ENCODE measurements at regions of chr21 and their contacts with region 1.

Region 1: DNA sequence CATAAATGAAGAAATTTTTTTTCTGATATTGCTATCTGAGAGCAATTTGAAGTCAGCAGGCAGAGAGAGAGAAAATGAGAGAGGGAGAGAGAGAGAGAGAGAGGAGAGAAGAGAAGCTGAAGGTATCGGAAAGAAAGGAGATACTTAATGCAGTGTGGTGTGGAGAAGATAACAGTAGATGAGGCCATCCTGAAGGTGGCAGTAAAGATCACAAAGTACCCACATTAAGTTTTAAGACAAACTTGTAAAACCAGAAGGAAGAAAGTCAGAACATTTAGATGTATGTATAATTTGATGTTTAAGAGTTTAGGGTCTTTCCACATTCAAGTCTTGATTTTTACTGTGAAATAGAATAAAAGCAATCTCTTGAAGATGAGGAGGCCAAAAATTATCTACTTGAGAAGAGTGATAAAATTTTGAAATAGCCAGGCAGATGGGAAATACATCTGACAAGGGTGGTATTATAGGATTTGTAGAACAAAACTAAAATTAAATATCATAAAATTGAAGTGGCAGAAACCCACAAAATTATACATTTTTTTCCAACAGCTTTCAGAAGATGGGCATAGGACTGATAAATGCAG is 1753.4 kb downstream of the MRPL39 start:
- DNase-seq: no peak
- H3K4me3 ChIP-seq: no peak overlapping the region
- H3K27ac ChIP-seq: no peak overlapping the region
- H3K4me1 ChIP-seq: peaks cover 0 to 7% (median 0%) of the 10 kb centered on the region in 6 donors
- H3K27me3 ChIP-seq: no peaks in the 10 kb centered on the region
- CTCF ChIP-seq: peak in 10 of 11 experiments; percentile 32 to 75 (median 62)
- POLR2A ChIP-seq: no peak

Region 2: DNA sequence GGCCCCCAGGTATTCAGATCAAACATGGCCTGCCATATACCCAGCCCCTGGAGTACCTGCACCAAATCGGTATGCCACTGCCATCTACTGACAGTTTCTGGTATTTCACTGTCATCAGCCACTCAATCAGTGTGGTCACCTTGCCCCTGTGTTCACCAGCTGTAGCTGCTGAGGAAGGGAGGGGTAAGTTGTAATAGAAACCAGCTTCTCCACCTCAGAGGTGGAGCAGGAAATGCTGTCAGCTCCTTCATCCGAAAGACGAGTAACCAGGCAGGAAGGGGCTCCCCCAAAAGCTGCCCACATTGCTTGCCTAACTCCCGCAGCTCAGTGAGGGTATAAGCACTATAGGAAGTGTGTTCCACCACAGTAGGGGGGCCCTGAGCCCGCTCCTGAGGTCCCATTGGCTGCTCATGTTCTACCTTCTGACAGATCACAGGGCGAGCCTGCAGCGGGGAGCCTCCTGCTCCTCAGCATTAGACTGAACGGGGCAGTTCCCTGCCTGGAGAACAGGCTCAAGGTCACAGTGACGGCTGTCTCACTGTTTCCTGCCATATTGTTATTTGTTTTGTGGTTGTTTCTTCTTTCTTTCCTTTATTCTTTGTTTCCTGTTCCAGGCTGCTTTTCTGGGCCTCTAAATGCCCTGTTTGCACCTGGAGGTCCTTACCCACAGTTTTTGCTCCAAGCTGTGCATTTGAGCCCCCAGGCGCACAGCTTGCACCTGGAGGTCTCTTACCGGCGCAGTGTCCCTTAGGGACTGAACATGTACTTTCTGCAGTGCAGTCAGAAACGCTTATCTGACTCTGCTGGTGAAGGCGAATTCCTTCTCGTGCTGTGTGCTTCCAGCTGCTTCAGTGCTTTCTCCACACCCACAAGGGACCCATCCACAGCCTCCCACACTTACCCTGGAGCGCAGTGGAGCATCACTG is 115.1 kb after region 1 on chr21:
- intact Hi-C with region 1: loop called (anchors 5 kb)
- DNase-seq: peak; percentile 88
- H3K4me3 ChIP-seq: peak overlapping the region in 5 of 8 donors; percentile 19 to 61 (median 22)
- H3K27ac ChIP-seq: peak overlapping the region in 5 of 8 donors; percentile 37 to 78 (median 60)
- H3K4me1 ChIP-seq: peaks cover 0 to 25% (median 14%) of the 10 kb centered on the region in 6 donors
- H3K27me3 ChIP-seq: no peaks in the 10 kb centered on the region
- CTCF ChIP-seq: peak; percentile 34 to 95 (median 78)
- POLR2A ChIP-seq: no peak

Measured in spleen (tissue), 13 donors.